Kidney (tissue), 22 donors: ENCODE measurements at regions of chr17 and their contacts with region 1.

Region 1: DNA sequence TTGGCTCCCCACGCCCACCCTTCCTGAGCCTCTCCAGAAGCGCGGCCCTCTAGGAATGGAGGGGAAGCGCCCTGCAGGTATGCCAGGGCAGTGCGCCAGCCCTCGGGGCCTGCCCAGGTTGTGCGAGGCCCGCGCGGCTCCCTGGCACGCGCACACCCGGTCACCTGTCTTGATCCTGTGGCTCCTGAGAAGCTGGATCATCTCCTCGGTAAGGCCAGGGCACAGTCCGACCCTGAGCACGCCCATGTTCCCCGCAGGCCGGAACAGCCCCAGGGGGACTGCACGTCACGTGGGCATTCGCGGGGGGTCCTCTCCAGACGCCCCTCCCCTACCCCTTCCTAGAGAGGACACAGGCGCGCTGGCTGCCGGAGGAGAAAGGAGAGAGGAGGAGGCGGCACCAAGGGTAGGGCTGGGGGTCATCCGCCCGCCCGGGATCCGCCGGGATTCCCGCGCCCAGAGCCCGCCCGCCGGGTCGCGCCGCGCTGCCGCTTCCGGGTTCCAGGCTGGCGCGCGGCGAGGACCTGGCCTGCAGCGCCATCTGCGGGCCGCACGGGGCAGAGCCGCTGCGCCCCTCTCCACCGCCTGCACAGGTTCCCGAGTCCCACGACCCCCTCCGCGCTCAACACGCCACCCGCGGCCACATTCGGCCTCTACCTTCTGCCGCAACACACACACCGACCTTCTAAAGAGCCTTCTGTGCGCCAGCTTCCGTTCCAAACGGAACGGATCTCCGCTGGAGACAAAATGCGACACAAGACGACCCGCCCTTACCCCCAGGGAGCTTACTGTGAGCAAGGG is at the start of gene RAD51D:
- DNase-seq: peak; percentile 82 to 91 (median 90)
- H3K4me3 ChIP-seq: peak within 1 kb of the TSS; percentile 70 to 83 (median 80)
- H3K27ac ChIP-seq: peak within 1 kb of the TSS; percentile 53 to 78
- H3K4me1 ChIP-seq: peaks cover 0 to 13% (median 0%) of the 10 kb centered on the region in 3 donors
- H3K27me3 ChIP-seq: no peaks in the 10 kb centered on the region
- CTCF ChIP-seq: peak; percentile 97
- total RNA-seq, gene RAD51D: 13.8 TPM

Region 2: GRCh38 chr17:34998205-34998604 is 121.4 kb before region 1 on chr17:
- intact Hi-C with region 1: loop called (anchors 10 kb)
- DNase-seq: peak in 4 of 5 donors; percentile 47 to 75 (median 58)
- H3K4me3 ChIP-seq: no peak overlapping the region
- H3K27ac ChIP-seq: peak overlapping the region in 1 of 2 donors; percentile 33
- H3K4me1 ChIP-seq: peaks cover 0 to 10% (median 9%) of the 10 kb centered on the region in 3 donors
- H3K27me3 ChIP-seq: no peaks in the 10 kb centered on the region
- CTCF ChIP-seq: peak; percentile 68

Region 3: DNA sequence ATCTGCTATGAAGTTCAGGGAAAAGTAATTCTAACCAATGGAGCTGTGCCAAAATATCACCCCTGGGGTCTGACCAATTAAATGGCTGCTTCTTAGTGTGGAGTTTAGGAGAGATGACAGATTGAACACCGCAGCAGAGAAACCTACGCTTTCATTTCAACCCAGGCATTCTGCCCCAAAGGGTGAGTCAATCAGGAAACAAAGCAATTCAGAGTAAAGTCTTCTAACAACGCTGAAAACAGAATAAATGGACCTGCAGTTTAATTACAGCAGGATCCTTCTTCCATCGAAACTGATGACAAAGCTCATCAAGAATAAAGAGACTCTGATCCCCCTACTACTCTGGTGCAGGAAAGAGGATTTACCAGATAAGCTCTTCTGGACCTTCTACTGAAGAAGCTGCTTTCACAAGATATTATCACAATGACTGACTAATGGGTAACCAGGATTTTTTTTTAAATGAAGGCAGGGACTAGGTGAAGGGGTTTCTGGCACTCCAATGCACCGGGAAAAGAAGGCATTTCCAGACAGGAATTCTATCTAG is 72.8 kb before region 1 on chr17:
- intact Hi-C with region 1: no loop called
- DNase-seq: no peak
- H3K4me3 ChIP-seq: peak overlapping the region in 1 of 3 donors; percentile 16
- H3K27ac ChIP-seq: peak overlapping the region in 1 of 2 donors; percentile 11
- H3K4me1 ChIP-seq: peaks cover 0 to 19% (median 8%) of the 10 kb centered on the region in 3 donors
- H3K27me3 ChIP-seq: no peaks in the 10 kb centered on the region
- CTCF ChIP-seq: no peak